Sigmoid colon (tissue), 7 donors: ENCODE measurements at regions of chr11 and their contacts with region 1.

Region 1: DNA sequence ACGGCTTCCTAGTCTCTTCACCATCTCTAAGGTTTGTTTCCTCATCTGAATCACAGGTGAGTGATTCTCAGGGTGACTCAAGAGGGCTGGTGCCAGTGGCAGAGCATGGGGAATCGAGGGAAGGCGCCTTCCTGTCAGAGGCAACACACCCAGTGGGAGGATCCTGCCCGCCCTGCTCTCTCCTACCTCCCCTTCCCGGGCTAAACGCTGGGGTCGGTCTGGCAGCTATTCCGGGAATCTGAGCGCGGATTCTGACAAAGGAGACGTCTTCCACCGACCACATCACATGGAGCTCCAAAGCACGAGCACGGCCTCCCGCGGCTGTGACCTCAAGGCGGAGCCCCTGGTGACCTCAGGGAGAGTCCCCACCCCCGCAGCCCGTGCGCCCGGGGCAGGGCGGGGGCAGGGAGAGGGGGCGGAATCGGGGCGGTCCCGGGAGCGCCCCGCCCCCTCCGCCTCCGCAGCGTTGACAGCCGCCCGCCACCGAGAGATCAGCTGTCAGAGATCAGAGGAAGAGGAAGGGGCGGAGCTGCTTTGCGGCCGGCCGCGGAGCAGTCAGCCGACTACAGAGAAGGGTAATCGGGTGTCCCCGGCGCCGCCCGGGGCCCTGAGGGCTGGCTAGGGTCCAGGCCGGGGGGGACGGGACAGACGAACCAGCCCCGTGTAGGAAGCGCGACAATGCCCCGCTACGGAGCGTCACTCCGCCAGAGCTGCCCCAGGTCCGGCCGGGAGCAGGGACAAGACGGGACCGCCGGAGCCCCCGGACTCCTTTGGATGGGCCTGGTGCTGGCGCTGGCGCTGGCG is at the start of gene SMPD1:
- DNase-seq: peak; percentile 96
- H3K4me3 ChIP-seq: peak within 1 kb of the TSS; percentile 78 to 96 (median 82)
- H3K27ac ChIP-seq: peak within 1 kb of the TSS; percentile 89 to 95 (median 90)
- H3K4me1 ChIP-seq: peaks cover 3 to 22% (median 17%) of the 10 kb centered on the region in 4 donors
- H3K27me3 ChIP-seq: no peaks in the 10 kb centered on the region
- CTCF ChIP-seq: no peak
- EP300 ChIP-seq: no peak
- POLR2A ChIP-seq: peak; percentile 67 to 71
- total RNA-seq, gene SMPD1: 17.1 to 36.8 (median 18.5) TPM

Region 2: DNA sequence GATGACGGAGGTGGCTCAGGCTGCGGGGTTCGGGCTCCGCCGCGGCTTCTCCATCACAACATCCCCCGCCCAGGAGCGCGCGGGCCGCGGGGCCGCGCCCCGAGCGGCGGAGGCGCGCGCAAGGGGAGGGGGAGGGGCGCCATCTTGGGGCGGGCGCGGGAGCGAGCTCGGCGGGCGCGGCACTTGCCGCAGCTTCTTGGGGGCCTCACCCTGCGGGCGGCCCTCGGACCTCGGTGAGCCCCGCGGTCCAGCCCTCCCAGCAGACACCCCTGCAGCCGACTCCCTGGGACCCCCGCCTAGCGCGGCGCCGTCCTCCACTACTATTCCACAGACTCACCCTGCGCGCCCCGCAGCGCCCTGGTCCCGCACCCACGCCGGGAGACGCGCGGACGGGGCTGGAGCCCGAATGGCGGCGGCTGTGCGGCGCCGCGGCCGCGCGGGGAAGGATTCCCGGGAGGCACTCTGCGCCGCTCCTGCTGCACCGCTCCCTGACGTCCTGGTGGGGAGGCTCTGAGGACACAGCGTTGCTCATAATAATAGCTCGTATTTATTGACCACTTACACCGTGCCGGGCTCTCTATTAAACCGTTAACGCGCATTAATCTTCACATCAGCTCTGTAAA is 29.0 kb after region 1 on chr11 and contains the start of gene APBB1:
- intact Hi-C with region 1: loop called (anchors 2 kb)
- DNase-seq: peak; percentile 82
- H3K4me3 ChIP-seq: peak within 1 kb of the TSS; percentile 79 to 99 (median 89)
- H3K27ac ChIP-seq: peak within 1 kb of the TSS; percentile 86 to 98 (median 94)
- H3K4me1 ChIP-seq: peaks cover 0 to 35% (median 24%) of the 10 kb centered on the region in 4 donors
- H3K27me3 ChIP-seq: no peaks in the 10 kb centered on the region
- CTCF ChIP-seq: peak in 2 of 4 experiments; percentile 14 to 17
- EP300 ChIP-seq: no peak
- POLR2A ChIP-seq: no peak
- total RNA-seq, gene APBB1: 51.0 to 85.0 (median 61.7) TPM

Region 3: GRCh38 chr11:6468712-6469495 is 78.8 kb after region 1 on chr11:
- intact Hi-C with region 1: no loop called
- DNase-seq: peak; percentile 92
- H3K4me3 ChIP-seq: no peak overlapping the region
- H3K27ac ChIP-seq: peak overlapping the region; percentile 50 to 68 (median 60)
- H3K4me1 ChIP-seq: peaks cover 0 to 37% (median 26%) of the 10 kb centered on the region in 4 donors
- H3K27me3 ChIP-seq: no peaks in the 10 kb centered on the region
- CTCF ChIP-seq: no peak
- EP300 ChIP-seq: no peak
- POLR2A ChIP-seq: no peak